Activated naive CD4-positive, alpha-beta T cell treated with anti-CD3 and anti-CD28 coated beads for 36 hours (primary cell): ENCODE measurements at regions of chr5 and their contacts with region 1.

Region 1: DNA sequence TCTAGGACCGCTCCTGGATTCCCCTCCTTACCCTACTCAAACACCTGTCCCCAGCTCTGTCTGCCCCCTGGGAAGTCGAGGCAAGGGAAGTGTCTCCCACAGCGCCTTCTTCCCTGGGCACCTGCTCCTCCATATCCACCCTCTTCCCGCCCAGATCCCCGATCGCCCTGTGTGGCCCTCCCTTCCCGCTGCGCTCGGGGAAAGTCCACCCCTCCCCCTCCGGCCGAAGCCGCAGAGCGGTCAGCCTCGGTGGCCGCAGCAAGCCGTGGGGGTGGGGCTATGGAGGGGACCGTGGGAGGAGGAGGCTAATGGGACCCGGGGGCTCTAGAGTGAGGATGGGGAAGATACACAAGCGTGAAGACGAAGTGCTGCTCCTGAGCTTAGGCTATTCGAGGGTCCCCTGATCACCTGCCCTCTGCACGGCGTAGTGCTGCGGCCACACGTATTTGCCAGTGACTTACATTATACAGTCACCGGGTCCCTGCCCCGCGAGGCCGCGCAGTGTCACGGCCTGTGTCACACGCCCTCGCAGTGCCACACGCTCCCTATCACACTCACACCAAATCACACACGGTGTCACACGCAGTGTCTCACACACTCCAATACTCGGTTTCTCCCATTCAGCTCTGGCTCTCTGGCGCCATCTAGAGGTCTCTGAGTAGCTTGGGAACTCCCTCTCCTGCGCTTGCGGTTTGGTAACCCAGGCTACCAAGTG is 658 bp upstream of the PCDH1 start:
- DNase-seq: peak; percentile 96
- H3K4me3 Mint-ChIP-seq: peak overlapping the region; percentile 65
- H3K27ac Mint-ChIP-seq: no peak overlapping the region
- H3K4me1 Mint-ChIP-seq: peaks cover 19% of the 10 kb centered on the region
- H3K27me3 Mint-ChIP-seq: peaks cover 62% of the 10 kb centered on the region

Region 2: GRCh38 chr5:141664732-141665461 is 214.0 kb before region 1 on chr5:
- CTCF ChIA-PET with region 1: interaction called, 25 read pairs
- intact Hi-C with region 1: loop called (anchors 1 kb)
- DNase-seq: peak; percentile 84
- H3K4me3 Mint-ChIP-seq: no peak overlapping the region
- H3K27ac Mint-ChIP-seq: no peak overlapping the region
- H3K4me1 Mint-ChIP-seq: peaks cover 2% of the 10 kb centered on the region
- H3K27me3 Mint-ChIP-seq: no peaks in the 10 kb centered on the region

Region 3: GRCh38 chr5:141701360-141702119 is 177.3 kb before region 1 on chr5:
- CTCF ChIA-PET with region 1: interaction called, 161 read pairs
- intact Hi-C with region 1: loop called (anchors 1 kb)
- DNase-seq: peak; percentile 36
- H3K4me3 Mint-ChIP-seq: peak overlapping the region; percentile 67
- H3K27ac Mint-ChIP-seq: no peak overlapping the region
- H3K4me1 Mint-ChIP-seq: peaks cover 15% of the 10 kb centered on the region
- H3K27me3 Mint-ChIP-seq: peaks cover 21% of the 10 kb centered on the region

Region 4: DNA sequence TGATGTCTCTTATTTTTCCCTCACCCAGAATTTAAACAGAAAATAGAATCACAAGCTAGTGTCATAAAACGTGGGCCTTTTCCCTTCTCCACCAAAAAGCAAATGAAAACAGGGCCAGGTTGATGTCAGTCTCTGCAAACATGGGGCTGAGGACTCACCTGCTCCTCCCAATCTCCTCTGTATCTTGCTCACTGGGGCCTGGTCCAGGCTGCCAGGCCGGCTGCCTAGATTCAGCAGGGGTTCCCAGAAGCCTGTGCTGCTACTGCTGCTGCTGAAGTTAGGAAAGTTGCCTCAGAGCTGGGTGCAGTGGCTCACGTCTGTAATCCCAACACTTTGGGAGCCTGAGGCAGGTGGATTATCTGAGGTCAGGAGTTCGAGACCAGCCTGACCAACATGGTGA is 85.0 kb before region 1 on chr5:
- CTCF ChIA-PET with region 1: interaction called, 11 read pairs
- intact Hi-C with region 1: no loop called
- DNase-seq: no peak
- H3K4me3 Mint-ChIP-seq: no peak overlapping the region
- H3K27ac Mint-ChIP-seq: no peak overlapping the region
- H3K4me1 Mint-ChIP-seq: no peaks in the 10 kb centered on the region
- H3K27me3 Mint-ChIP-seq: peaks cover 4% of the 10 kb centered on the region

Region 5: GRCh38 chr5:141849375-141850243 is 29.3 kb before region 1 on chr5:
- CTCF ChIA-PET with region 1: interaction called, 11 read pairs
- intact Hi-C with region 1: loop called (anchors 1 kb)
- DNase-seq: peak; percentile 84
- H3K4me3 Mint-ChIP-seq: peak overlapping the region; percentile 86
- H3K27ac Mint-ChIP-seq: peak overlapping the region; percentile 75
- H3K4me1 Mint-ChIP-seq: peaks cover 16% of the 10 kb centered on the region
- H3K27me3 Mint-ChIP-seq: no peaks in the 10 kb centered on the region

Region 6: GRCh38 chr5:141923448-141924352 is 44.8 kb after region 1 on chr5 and contains the start of gene DELE1:
- CTCF ChIA-PET with region 1: interaction called, 21 read pairs
- intact Hi-C with region 1: loop called (anchors 1 kb)
- DNase-seq: peak; percentile 95
- H3K4me3 Mint-ChIP-seq: peak within 1 kb of the TSS; percentile 90
- H3K27ac Mint-ChIP-seq: peak within 1 kb of the TSS; percentile 93
- H3K4me1 Mint-ChIP-seq: peaks cover 18% of the 10 kb centered on the region
- H3K27me3 Mint-ChIP-seq: no peaks in the 10 kb centered on the region
- total RNA-seq, gene DELE1: 48.0 to 50.6 TPM

Region 7: DNA sequence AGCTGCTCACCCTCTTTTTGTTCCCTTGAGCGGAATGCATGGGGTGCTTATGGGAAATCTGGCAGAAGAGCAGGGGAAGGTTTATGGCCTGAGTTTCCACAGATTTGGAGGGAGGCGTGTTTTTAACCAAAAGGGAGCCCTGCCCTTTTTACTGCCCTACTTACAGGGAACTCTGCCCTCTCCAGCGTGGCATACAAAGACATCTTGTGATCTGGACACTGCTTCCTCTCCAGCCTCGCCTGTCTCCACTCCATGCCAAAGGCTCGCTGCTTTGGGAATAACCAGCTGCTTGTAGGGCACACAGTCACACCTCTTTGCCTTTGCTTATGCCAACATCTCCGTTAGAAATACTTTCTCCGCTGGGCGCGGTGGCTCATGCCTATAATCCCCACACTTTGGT is 1205.5 kb after region 1 on chr5:
- CTCF ChIA-PET with region 1: no interaction called
- intact Hi-C with region 1: no loop called
- DNase-seq: no peak
- H3K4me3 Mint-ChIP-seq: no peak overlapping the region
- H3K27ac Mint-ChIP-seq: no peak overlapping the region
- H3K4me1 Mint-ChIP-seq: no peaks in the 10 kb centered on the region
- H3K27me3 Mint-ChIP-seq: no peaks in the 10 kb centered on the region